ENCODE measurements at regions of chr16 and their contacts with region 1.

Region 1: DNA sequence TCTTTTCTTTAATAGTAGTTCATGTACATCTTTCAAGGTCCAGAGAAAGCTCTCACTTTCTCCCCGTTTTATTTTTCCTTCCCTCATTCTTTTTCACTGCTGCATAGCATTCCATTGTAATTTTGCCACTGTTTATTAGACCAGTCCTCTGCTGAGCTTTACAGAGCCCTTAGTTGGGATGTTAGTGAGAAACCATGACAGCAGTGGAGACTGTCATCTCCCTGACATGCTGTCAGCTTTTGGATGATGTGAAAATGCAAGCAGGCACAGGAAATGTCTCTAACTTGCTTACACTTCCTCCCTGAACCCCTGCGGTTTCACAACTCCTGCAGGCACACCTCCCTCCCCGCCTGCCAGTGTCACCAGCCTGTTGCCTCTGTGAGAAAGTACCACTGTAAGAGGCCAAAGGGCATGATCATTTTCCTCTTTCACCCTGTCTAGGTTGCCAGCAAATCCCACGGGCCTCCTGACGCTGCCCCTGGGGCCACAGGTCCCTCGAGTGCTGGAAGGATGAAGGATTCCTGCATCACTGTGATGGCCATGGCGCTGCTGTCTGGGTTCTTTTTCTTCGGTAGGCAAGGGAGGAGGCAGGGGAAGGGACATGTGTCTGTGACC is at the start of gene ITGAL:
- DNase-seq: peak; percentile 47 to 90 (median 78)
- ATAC-seq: peak; percentile 81 to 91
- H3K4me3 Mint-ChIP-seq: peak within 1 kb of the TSS; percentile 91 to 99 (median 97)
- H3K27ac Mint-ChIP-seq: peak within 1 kb of the TSS; percentile 89 to 98 (median 94)
- H3K4me1 Mint-ChIP-seq: peaks cover 25 to 81% (median 65%) of the 10 kb centered on the region in 4 donors
- H3K27me3 Mint-ChIP-seq: no peaks in the 10 kb centered on the region
- polyA plus RNA-seq, gene ITGAL: 121 to 157 (median 124) TPM

Region 2: DNA sequence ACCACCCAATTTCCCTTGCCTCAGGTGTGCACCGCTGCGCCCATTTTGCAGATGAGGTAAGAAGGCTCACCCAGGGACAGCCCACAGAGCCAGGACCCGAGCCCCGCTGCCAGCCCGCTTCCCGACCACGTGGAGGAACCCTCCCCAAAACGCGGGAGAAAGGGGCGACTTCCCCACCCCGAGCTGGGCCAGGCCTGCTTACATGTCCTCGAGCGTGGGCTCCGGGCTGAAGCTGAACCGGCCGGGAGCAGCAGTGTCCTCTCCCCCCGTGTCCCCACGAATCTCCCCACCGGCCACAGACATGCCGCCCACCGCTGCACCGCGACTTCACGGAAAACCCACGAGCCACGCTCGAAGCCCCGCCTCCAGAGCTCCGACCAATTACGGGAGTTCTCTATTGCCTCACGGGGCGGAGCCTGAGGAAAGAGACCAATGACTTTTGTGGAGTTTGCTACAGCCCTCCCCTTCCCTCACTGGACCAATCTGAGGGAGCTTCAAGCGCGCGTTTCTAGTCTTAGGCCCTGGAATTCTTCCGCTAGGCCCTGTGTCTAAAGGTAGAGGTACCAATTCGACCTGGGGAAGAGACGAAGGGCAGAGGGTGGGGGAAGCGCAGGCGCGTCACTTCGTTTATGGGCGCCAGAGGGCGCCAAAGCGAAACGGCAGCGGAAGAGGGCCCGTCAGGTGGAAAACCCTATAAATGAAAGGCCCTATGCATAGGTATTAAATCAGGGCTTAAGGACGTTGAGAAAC is 42.6 kb before region 1 on chr16 and contains the start of gene DCTPP1:
- POLR2A ChIA-PET with region 1: interaction called, 25 read pairs
- DNase-seq: peak; percentile 84 to 99 (median 96)
- ATAC-seq: peak; percentile 97
- H3K4me3 Mint-ChIP-seq: no peak within 1 kb of the TSS
- H3K27ac Mint-ChIP-seq: peak within 1 kb of the TSS in 4 of 10 donors; percentile 52 to 80 (median 75)
- H3K4me1 Mint-ChIP-seq: peaks cover 5 to 35% (median 12%) of the 10 kb centered on the region in 4 donors
- H3K27me3 Mint-ChIP-seq: no peaks in the 10 kb centered on the region
- polyA plus RNA-seq, gene DCTPP1: 63.0 to 79.6 (median 64.0) TPM

Region 3: DNA sequence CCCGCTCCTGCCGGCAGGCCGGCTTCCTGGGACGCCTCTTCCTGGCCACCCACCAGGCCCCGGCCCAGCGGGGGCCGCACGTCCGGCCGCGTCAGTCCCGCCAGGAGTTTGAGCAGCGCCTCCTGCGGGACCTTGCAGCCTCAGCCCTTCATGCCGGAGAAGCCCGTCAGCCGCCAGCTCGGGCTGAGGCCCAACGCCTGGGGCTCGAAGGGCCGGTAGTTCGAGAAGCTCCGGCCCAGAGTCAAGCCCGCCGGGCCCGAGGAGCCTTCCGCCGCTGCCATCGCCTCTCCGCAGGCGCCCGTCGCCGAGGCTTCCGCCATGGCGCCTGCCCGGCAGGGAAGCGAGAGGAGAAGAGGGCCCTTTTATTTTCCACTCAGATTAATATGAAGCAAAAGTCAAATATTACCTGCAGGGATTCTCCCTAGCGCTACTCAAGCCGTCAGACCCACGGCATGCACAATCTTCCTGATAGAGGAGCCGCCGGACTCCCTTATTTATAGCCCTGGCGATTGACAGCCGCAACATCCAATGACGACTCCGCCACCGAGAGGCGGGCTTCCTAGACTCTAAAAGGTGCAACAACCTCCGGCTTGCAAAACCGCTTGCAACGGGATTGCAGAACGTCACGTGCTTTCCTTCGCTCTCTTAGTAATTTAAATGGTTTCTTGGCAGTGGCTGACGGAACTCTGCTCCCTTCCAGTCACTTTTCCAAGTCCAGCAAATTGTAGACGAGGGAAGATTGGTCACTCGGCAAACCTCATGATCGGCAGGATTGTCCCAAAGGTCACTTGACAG is 26.8 kb before region 1 on chr16 and contains the start of gene SEPHS2:
- POLR2A ChIA-PET with region 1: interaction called, 32 read pairs
- DNase-seq: peak; percentile 83 to 99 (median 94)
- ATAC-seq: peak; percentile 97
- H3K4me3 Mint-ChIP-seq: peak within 1 kb of the TSS; percentile 86 to 98 (median 96)
- H3K27ac Mint-ChIP-seq: peak within 1 kb of the TSS; percentile 95 to 99 (median 97)
- H3K4me1 Mint-ChIP-seq: peaks cover 13 to 49% (median 43%) of the 10 kb centered on the region in 4 donors
- H3K27me3 Mint-ChIP-seq: no peaks in the 10 kb centered on the region
- polyA plus RNA-seq, gene SEPHS2: 45.5 to 60.7 (median 55.0) TPM

Region 4: DNA sequence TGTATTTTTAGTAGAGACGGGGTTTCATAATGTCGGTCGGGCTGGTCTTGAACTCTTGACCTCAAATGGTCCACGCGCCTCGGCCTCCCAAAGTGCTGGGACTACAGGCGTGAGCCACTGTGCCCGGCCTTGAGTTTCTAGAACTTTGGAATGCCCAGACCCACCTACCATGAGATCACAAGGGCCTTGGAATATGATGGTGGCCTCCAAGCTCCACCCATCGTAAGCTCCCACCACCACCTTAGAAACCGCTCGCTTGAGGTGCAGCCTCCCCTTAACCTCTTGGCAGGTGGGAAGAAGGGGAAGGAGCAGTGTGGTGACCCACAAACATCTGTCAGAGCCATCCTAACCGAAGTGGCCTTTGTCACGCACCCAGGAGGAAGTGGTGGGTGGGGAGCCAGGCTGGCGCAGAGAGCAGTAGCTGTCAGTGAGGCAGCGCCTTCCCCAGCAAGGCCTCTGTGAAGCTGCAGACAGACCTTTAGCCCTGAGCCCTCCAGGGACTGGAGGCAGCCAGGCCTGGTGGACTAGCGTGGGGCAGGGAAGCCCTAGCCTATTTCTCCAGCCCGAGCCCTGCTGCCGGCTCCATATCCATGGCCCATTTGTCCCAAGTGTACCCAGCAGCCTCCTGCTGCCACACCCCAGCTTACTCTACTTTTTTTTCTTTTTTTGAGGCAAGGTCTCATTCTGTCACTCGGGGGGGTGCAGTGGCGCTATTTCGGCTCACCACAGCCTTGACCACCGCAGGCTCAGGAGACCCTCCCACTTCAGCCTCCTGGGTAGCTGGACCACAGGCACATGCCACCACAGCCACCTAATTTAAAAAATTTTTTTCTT is 13.7 kb before region 1 on chr16:
- POLR2A ChIA-PET with region 1: interaction called, 247 read pairs
- DNase-seq: peak; percentile 30 to 85 (median 63)
- ATAC-seq: peak; percentile 96 to 98
- H3K4me3 Mint-ChIP-seq: peak overlapping the region; percentile 48 to 78 (median 68)
- H3K27ac Mint-ChIP-seq: peak overlapping the region; percentile 68 to 93 (median 88)
- H3K4me1 Mint-ChIP-seq: peaks cover 18 to 52% (median 48%) of the 10 kb centered on the region in 4 donors
- H3K27me3 Mint-ChIP-seq: no peaks in the 10 kb centered on the region

Region 5: GRCh38 chr16:30491744-30492308 is 19.4 kb after region 1 on chr16:
- POLR2A ChIA-PET with region 1: interaction called, 14 read pairs
- DNase-seq: peak in 3 of 10 donors; percentile 12 to 73 (median 20)
- ATAC-seq: peak; percentile 62 to 89
- H3K4me3 Mint-ChIP-seq: peak overlapping the region in 4 of 10 donors; percentile 8 to 39 (median 23)
- H3K27ac Mint-ChIP-seq: peak overlapping the region; percentile 68 to 92 (median 86)
- H3K4me1 Mint-ChIP-seq: peaks cover 10 to 36% (median 20%) of the 10 kb centered on the region in 4 donors
- H3K27me3 Mint-ChIP-seq: no peaks in the 10 kb centered on the region

Measured in naive thymus-derived CD8-positive, alpha-beta T cell (primary cell).